ENCODE measurements at regions of chr13 and their contacts with region 1.

Region 1: DNA sequence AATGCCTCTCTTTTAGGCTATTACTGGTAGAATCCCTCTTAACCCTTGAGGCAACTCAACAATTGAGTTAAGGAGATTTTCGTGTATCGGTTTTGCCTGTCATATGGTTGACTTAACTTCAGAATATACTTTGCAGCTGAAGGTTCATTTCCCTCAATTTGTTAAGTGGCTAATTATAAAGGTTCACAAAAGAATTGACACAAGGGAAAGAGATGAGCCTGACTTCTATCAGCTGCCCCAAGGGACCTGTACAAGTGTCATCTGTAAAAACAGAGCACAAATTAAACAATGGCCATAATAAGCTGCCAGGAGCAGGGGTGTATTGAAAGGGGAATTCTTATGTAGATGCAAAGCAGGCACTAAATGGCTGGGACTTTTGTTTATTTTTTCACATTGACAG is 334.8 kb upstream of the OBI1 start:
- DNase-seq: no peak
- ATAC-seq: no peak
- H3K4me3 ChIP-seq: no peak overlapping the region
- H3K27ac ChIP-seq: no peak overlapping the region
- H3K4me1 ChIP-seq: no peaks in the 10 kb centered on the region
- H3K27me3 ChIP-seq: no peaks in the 10 kb centered on the region
- CTCF ChIP-seq: no peak
- POLR2A ChIP-seq: no peak
- RAD21 ChIP-seq: no peak

Region 2: DNA sequence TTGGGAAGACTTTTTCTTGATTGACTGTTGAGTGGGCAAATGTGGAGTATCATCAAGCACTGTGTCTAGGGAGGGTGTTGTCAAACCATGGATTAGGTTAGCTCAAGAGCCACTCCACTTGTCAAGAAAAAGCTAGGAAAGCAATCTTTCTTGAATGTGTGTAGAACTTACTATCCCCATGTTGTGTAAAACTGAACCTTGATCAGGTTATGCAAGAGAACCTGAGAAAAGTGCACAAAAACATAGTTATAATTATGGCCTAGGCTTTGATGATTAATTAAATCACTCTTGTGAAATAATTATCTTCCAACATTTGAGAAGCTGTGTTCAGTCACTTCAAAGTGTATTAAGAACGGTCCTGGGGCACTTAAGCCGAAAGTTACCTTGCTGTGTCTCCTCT is 96.6 kb before region 1 on chr13:
- CTCF ChIA-PET with region 1: no interaction called
- POLR2A ChIA-PET with region 1: no interaction called
- dilution Hi-C with region 1: no loop called
- in situ Hi-C with region 1: no loop called
- intact Hi-C with region 1: loop called (anchors 1 kb)
- DNase-seq: no peak
- ATAC-seq: no peak
- H3K4me3 ChIP-seq: no peak overlapping the region
- H3K27ac ChIP-seq: no peak overlapping the region
- H3K4me1 ChIP-seq: no peaks in the 10 kb centered on the region
- H3K27me3 ChIP-seq: no peaks in the 10 kb centered on the region
- CTCF ChIP-seq: no peak
- POLR2A ChIP-seq: no peak
- RAD21 ChIP-seq: no peak

Measured in IMR-90 (cell line).